GM12878 (cell line): ENCODE measurements at regions of chr10 and their contacts with region 1.

Region 1: GRCh38 chr10:104045151-104046089 is 40.3 kb downstream of the COL17A1 start:
- DNase-seq: no peak
- ATAC-seq: peak; percentile 88
- H3K4me3 ChIP-seq: no peak overlapping the region
- H3K27ac ChIP-seq: no peak overlapping the region
- H3K4me1 ChIP-seq: no peaks in the 10 kb centered on the region
- H3K27me3 ChIP-seq: peaks cover 0 to 3% of the 10 kb centered on the region in 2 experiments; a peak in 3 of 4 replicates
- CTCF ChIP-seq: peak in 2 of 3 experiments; percentile 39 to 51; a peak in 3 of 6 replicates
- EP300 ChIP-seq: no peak
- POLR2A ChIP-seq: no peak
- RAD21 ChIP-seq: peak; percentile 54

Region 2: GRCh38 chr10:103692952-103693802 is 352.2 kb before region 1 on chr10:
- CTCF ChIA-PET with region 1: no interaction called
- POLR2A ChIA-PET with region 1: no interaction called
- RAD21 ChIA-PET with region 1: no interaction called
- SMC1A ChIA-PET with region 1: no interaction called
- in situ Hi-C with region 1: no loop called
- intact Hi-C with region 1: no loop called
- DNase-seq: no peak
- ATAC-seq: peak; percentile 37
- H3K4me3 ChIP-seq: peak overlapping the region; percentile 99
- H3K27ac ChIP-seq: peak overlapping the region; percentile 80
- H3K4me1 ChIP-seq: peaks cover 45% of the 10 kb centered on the region
- H3K27me3 ChIP-seq: no peaks in the 10 kb centered on the region
- CTCF ChIP-seq: 0 out of 6 replicates have a peak, but pooled peaks of 1 of the 3 experiments have one; percentile 2
- EP300 ChIP-seq: no peak
- POLR2A ChIP-seq: peak; percentile 34; the same call in 1 of the 2 replicates
- RAD21 ChIP-seq: no peak

Region 3: GRCh38 chr10:103870516-103870915 is 174.9 kb before region 1 on chr10:
- CTCF ChIA-PET with region 1: no interaction called
- POLR2A ChIA-PET with region 1: no interaction called
- RAD21 ChIA-PET with region 1: no interaction called
- SMC1A ChIA-PET with region 1: no interaction called
- in situ Hi-C with region 1: no loop called
- intact Hi-C with region 1: no loop called
- DNase-seq: no peak
- ATAC-seq: no peak
- H3K4me3 ChIP-seq: no peak overlapping the region
- H3K27ac ChIP-seq: no peak overlapping the region
- H3K4me1 ChIP-seq: no peaks in the 10 kb centered on the region
- H3K27me3 ChIP-seq: no peaks in the 10 kb centered on the region
- CTCF ChIP-seq: no peak
- EP300 ChIP-seq: no peak
- POLR2A ChIP-seq: no peak
- RAD21 ChIP-seq: no peak

Region 4: GRCh38 chr10:104209575-104210198 is 164.3 kb after region 1 on chr10:
- CTCF ChIA-PET with region 1: interaction called, 4 read pairs
- POLR2A ChIA-PET with region 1: no interaction called
- RAD21 ChIA-PET with region 1: no interaction called
- SMC1A ChIA-PET with region 1: no interaction called
- in situ Hi-C with region 1: no loop called
- intact Hi-C with region 1: loop called (anchors 1 kb)
- DNase-seq: no peak
- ATAC-seq: peak; percentile 82
- H3K4me3 ChIP-seq: no peak overlapping the region
- H3K27ac ChIP-seq: no peak overlapping the region
- H3K4me1 ChIP-seq: no peaks in the 10 kb centered on the region
- H3K27me3 ChIP-seq: no peaks in the 10 kb centered on the region; a peak in 3 of 4 replicates
- CTCF ChIP-seq: peak; percentile 48 to 58 (median 51); a peak in 5 of 6 replicates
- EP300 ChIP-seq: no peak
- POLR2A ChIP-seq: no peak
- RAD21 ChIP-seq: peak; percentile 63